SK-N-SH (cell line): ENCODE measurements at regions of chr7 and their contacts with region 1.

Region 1: DNA sequence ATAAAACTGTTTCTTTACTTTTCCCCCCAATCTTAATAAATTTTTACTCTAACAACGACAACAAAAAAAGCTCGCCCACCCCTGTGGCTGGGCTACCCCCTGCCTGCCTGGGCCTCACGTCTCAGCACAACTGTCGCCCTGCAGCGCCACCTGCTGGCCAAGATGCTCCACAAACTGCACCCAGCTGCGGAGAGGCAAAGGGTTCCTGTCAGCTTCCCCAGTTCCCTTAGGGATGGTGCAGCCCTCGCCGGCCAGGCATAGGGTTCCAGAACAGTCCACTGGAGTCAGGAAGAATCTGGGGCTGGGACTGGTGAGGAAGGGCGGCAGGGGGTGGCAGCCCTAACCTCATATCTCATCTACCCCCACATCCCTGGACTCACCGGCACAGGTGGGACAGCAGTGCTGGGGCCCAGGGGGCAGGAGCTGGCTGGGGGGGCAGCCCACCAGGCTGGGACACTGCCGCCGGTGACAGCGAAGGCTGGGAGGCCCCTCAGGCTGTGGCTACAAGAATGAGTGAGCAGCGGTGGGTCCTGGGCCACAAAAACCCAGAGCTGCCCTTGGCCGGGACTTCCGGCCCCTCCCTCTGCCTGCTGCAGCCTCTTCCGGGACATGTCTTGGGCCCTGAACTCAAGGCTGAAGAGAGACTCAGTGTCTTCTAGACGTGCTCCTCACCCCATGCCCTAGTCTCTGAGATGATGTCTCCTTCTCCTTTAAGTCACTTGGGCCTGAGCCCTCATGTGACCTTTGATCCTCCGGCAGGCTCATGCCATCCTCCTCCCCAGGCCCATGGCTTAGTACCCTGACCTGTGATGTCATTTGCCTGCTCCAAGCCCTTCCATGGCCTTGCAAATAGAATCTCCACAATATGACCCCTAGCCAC is 21.2 kb downstream of the ATP6V1F start:
- DNase-seq: peak; percentile 96
- H3K4me3 ChIP-seq: no peak overlapping the region
- H3K27ac ChIP-seq: no peak overlapping the region
- H3K4me1 ChIP-seq: peaks cover 0 to 7% of the 10 kb centered on the region in 2 experiments; a peak in 1 of 4 replicates
- H3K27me3 ChIP-seq: no peaks in the 10 kb centered on the region
- CTCF ChIP-seq: peak; percentile 99
- EP300 ChIP-seq: no peak
- RAD21 ChIP-seq: peak; percentile 81

Region 2: DNA sequence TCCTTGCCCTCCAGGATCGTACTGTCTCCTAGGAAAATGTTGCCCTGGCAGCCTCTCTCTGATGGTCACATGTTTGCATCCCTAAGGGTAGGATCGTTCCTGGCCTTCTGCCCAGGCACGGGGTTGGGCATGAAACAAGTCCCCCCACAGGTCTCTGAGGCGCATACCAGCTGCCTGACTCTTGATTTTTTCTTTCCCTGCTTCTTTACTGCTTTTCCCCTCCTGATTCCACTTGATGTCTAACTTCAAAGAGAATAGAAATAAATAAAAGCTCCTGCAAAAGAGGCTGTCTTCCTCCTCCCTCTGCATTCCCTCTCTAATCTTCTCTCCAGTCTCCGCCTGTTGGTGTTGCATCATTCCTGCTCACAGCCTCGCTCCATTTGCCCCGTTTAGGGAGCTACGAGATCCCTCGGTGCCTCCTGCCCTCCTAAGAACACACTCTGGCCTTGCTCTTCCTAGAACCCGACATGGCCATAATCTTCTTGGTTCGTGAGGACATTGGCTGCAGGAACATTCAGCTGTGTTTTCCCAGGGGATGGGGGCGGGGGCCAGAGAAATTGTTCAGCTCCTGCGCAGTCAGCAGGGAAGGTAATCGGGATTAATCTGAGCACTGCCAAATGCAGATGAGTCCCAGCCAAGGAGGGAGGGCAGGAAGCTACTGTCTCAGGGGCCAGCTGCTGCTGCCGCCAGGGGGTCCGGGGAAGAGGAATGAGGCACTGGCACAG is 616.8 kb before region 1 on chr7:
- CTCF ChIA-PET with region 1: no interaction called
- POLR2A ChIA-PET with region 1: no interaction called
- DNase-seq: peak; percentile 90
- H3K4me3 ChIP-seq: peak overlapping the region; percentile 30 to 33; a peak in 3 of 4 replicates
- H3K27ac ChIP-seq: peak overlapping the region; percentile 54 to 99
- H3K4me1 ChIP-seq: peaks cover 18 to 41% of the 10 kb centered on the region in 2 experiments; a peak in 3 of 4 replicates
- H3K27me3 ChIP-seq: no peaks in the 10 kb centered on the region
- CTCF ChIP-seq: peak; percentile 34
- EP300 ChIP-seq: peak; percentile 8 to 77; a peak in 3 of 4 replicates
- RAD21 ChIP-seq: peak; percentile 41

Region 3: DNA sequence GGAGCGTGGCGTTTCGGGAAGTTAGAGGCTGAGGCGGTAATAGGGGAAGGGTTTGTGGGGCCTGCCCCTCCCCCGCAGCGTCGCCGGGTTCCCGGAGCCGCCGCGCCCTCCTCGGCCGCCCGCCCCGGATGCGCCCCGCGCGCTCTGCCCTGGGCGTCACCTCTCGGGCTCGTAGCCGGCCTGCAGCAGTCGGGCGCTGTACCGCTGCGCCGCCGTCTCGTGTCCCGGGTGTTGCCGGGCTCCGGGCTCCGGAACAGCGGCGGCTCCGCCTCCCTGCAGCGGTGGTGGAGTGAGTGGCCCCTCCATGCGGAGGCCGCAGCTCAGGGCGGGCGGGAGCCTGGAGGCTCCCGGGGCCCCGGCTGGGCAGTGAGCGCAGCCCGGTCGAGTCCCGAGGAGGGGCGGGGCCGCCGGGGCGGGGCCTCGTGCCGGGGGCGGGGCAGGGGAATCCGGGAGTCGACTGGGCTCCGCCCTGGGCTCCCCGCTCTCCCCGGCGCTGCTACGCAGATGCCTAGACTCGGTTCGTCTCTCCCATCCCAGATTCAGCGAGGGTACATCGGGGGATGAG is 474.2 kb before region 1 on chr7 and contains the start of gene IMPDH1:
- CTCF ChIA-PET with region 1: interaction called, 10 read pairs
- POLR2A ChIA-PET with region 1: no interaction called
- DNase-seq: peak; percentile 100
- H3K4me3 ChIP-seq: peak within 1 kb of the TSS; percentile 69 to 83
- H3K27ac ChIP-seq: peak within 1 kb of the TSS; percentile 35 to 79; a peak in 3 of 4 replicates
- H3K4me1 ChIP-seq: peaks cover 16 to 27% of the 10 kb centered on the region in 2 experiments; a peak in 2 of 4 replicates
- H3K27me3 ChIP-seq: no peaks in the 10 kb centered on the region
- CTCF ChIP-seq: no peak
- EP300 ChIP-seq: no peak
- RAD21 ChIP-seq: no peak
- polyA plus RNA-seq, gene IMPDH1: 80.4 and 82.0 TPM in 2 replicates

Region 4: DNA sequence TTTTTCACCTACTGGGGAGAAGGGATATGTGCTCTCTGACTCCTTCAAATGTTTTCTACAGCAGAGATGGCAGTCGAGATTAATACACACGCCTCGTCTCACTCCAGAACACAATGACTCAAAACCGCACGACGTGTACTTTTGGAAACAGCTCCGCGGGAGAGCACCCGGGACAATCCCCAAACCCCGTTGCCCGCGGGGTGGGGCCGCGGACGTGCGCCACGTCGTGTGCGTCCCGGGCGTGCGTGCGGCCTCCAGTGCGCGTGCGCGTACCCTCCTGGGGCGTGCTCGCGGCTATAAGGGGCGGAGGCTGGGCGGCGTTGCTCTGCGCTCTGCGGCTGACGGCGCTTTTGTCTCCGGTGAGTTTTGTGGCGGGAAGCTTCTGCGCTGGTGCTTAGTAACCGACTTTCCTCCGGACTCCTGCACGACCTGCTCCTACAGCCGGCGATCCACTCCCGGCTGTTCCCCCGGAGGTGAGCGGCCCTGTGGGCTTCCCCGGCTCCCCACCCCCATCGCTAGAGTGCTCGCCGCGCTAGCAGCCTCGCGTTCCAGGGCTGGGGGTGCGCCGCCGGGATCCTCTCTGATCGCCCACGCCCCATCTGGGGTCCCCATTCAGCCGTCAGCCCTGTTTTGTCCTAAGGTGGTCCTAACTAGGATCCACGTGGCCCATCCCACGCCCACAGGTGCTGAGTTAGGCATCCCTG is 428.2 kb before region 1 on chr7 and contains the start of gene HILPDA:
- CTCF ChIA-PET with region 1: interaction called, 26 read pairs
- POLR2A ChIA-PET with region 1: no interaction called
- DNase-seq: peak; percentile 99
- H3K4me3 ChIP-seq: peak within 1 kb of the TSS; percentile 89 to 99
- H3K27ac ChIP-seq: peak within 1 kb of the TSS; percentile 81 to 91
- H3K4me1 ChIP-seq: peaks cover 25 to 38% of the 10 kb centered on the region in 2 experiments; a peak in 3 of 4 replicates
- H3K27me3 ChIP-seq: no peaks in the 10 kb centered on the region
- CTCF ChIP-seq: no peak
- EP300 ChIP-seq: peak in 1 of 2 experiments; percentile 20; a peak in 1 of 4 replicates
- RAD21 ChIP-seq: no peak
- polyA plus RNA-seq, gene HILPDA: 24.0 and 29.1 TPM in 2 replicates

Region 5: GRCh38 chr7:128697302-128697905 is 186.5 kb before region 1 on chr7:
- CTCF ChIA-PET with region 1: interaction called, 12 read pairs
- POLR2A ChIA-PET with region 1: no interaction called
- DNase-seq: peak; percentile 89
- H3K4me3 ChIP-seq: peak overlapping the region; percentile 54 to 60
- H3K27ac ChIP-seq: no peak overlapping the region
- H3K4me1 ChIP-seq: no peaks in the 10 kb centered on the region; a peak in 1 of 4 replicates
- H3K27me3 ChIP-seq: peaks cover 6% of the 10 kb centered on the region; the same call in 1 of the 2 replicates
- CTCF ChIP-seq: peak; percentile 54
- EP300 ChIP-seq: no peak
- RAD21 ChIP-seq: peak; percentile 32; the same call in 1 of the 2 replicates

Region 6: DNA sequence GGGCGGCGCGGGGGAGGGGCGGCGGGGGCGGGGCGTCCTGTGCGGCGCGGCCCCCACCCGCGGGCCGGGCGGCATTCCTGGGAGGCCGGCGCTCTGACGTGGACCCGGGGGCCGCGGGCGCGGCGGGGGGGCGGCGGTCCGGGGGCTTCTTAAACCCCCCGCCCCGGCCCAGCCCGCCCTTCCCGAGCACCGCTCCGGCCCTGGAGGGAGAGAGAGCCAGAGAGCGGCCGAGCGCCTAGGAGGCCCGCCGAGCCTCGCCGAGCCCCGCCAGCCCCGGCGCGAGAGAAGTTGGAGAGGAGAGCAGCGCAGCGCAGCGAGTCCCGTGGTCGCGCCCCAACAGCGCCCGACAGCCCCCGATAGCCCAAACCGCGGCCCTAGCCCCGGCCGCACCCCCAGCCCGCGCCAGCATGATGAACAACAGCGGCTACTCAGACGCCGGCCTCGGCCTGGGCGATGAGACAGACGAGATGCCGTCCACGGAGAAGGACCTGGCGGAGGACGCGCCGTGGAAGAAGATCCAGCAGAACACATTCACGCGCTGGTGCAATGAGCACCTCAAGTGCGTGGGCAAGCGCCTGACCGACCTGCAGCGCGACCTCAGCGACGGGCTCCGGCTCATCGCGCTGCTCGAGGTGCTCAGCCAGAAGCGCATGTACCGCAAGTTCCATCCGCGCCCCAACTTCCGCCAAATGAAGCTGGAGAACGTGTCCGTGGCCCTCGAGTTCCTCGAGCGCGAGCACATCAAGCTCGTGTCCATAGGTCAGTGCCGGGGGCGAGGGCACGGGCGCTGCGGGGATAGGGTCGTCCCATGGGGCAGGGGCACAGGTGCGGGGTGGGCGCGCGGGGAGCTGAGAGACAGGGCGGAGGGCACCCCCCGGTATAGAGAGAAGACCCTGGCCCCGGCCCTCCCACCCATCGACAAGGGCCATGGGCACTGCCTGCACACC is 53.4 kb before region 1 on chr7 and contains the start of gene FLNC:
- CTCF ChIA-PET with region 1: interaction called, 12 read pairs
- POLR2A ChIA-PET with region 1: no interaction called
- DNase-seq: peak; percentile 90
- H3K4me3 ChIP-seq: peak within 1 kb of the TSS; percentile 68 to 90
- H3K27ac ChIP-seq: peak within 1 kb of the TSS; percentile 50 to 98
- H3K4me1 ChIP-seq: peaks cover 39 to 43% of the 10 kb centered on the region in 2 experiments; a peak in 3 of 4 replicates
- H3K27me3 ChIP-seq: no peaks in the 10 kb centered on the region
- CTCF ChIP-seq: no peak
- EP300 ChIP-seq: no peak
- RAD21 ChIP-seq: no peak
- polyA plus RNA-seq, gene FLNC: 22.5 and 43.7 TPM in 2 replicates

Region 7: DNA sequence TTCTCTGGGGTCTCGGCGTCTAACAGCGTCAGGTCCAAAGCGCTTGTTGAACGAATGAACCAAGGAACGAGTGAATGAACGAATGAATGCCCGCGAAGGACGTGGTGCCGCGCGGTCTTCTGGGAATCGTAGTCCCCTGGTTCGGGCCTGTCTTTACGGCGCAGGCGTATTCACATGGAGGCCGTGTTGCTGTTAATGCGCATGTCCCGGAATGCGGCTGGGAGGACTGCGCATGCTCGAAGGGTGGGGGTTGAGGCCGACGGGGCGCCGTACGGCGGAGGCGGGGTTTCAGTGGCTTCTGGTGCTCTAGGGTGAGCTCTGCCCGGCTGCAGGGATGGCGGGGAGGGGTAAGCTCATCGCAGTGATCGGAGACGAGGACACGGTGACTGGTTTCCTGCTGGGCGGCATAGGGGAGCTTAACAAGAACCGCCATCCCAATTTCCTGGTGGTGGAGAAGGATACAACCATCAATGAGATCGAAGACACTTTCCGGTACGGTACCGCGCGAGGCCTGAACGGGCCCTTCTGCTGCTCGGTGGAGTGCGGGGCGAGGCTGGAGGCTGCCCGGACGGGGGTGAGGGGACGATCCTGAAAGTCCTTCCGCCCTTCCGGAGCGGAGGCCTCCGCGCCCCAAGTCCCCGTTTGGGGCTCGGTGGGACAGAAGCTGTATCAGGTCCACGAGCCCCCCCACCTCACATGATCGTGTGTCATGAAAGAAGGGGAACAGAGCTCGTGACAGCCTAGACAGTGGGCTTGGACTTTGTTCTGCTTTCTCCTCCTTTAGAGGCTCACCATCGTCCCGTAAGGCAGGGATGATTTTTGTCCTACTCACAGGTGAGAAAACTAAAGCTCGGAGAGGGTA is 21.1 kb before region 1 on chr7 and contains the start of gene ATP6V1F:
- CTCF ChIA-PET with region 1: interaction called, 181 read pairs
- POLR2A ChIA-PET with region 1: no interaction called
- DNase-seq: peak; percentile 100
- H3K4me3 ChIP-seq: peak within 1 kb of the TSS; percentile 89 to 95
- H3K27ac ChIP-seq: peak within 1 kb of the TSS; percentile 60 to 72
- H3K4me1 ChIP-seq: peaks cover 0 to 18% of the 10 kb centered on the region in 2 experiments; a peak in 1 of 4 replicates
- H3K27me3 ChIP-seq: no peaks in the 10 kb centered on the region
- CTCF ChIP-seq: no peak
- EP300 ChIP-seq: no peak
- RAD21 ChIP-seq: no peak
- polyA plus RNA-seq, gene ATP6V1F: 437 and 495 TPM in 2 replicates

Region 8: DNA sequence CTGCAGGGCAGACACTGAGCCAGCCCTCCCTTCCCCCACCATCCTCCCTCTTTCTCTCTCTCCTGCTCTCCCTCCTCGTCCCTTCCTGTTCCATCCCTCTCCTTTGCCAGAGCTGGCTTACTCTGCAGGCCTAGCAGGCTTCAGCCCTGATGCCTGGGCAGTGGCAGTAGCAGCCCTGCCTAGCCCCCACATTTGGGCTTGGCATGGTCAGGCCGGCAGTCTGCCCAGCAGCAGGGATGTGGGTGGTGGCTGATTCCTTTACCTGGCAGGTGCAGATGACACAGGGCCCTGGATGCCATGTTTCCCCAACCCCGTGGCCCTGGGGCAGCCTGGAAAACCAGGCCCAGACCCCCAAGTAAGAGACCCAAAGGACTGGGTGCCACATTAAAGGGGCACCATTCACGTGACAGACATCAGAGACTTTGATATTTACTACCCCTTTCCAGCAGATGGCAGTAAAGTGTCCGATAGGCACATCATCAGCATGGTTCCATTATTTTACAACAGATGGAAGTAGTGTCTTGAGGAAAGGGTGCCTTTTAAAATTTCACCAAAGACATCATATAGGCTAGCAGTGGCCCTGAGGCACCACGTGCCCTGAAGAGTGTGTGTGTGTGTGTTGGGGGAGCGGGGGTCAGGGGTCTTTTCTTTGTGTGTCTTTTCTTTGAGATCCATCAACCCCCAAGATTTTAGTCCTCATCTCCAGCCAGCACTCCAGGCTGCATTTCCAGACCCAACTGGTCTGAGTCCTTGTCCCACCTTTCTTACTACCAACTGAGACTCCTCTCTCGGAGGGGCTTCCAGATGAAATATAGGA is 20.7 kb after region 1 on chr7:
- CTCF ChIA-PET with region 1: interaction called, 104 read pairs
- POLR2A ChIA-PET with region 1: no interaction called
- DNase-seq: peak; percentile 87
- H3K4me3 ChIP-seq: no peak overlapping the region
- H3K27ac ChIP-seq: no peak overlapping the region
- H3K4me1 ChIP-seq: peaks cover 0 to 6% of the 10 kb centered on the region in 2 experiments; a peak in 1 of 4 replicates
- H3K27me3 ChIP-seq: 0 out of 2 replicates have a peak, but pooled peaks cover 8% of the 10 kb centered on the region
- CTCF ChIP-seq: peak; percentile 74
- EP300 ChIP-seq: no peak
- RAD21 ChIP-seq: peak; percentile 79

Region 9: DNA sequence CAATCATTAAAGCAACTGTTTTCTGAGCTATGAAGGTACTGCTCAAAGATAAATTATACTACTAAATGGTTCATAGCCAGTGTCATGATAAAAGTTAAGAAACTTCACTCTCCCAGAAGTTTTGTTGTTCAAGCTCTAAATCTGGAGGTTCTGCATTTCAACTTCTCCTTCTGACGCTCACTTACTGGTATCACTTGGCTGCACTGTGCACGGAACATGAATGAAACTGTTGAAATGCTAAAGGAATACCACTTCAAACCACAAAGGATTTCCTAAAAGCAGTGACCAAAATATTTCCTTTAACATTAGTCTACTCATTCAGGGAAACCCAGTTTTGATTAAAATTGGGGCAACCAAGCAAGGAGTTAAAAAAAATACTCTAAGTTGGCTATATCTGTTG is 975.3 kb after region 1 on chr7:
- CTCF ChIA-PET with region 1: no interaction called
- POLR2A ChIA-PET with region 1: no interaction called
- DNase-seq: no peak
- H3K4me3 ChIP-seq: no peak overlapping the region
- H3K27ac ChIP-seq: peak overlapping the region; percentile 98 to 99
- H3K4me1 ChIP-seq: peaks cover 53 to 74% of the 10 kb centered on the region in 2 experiments
- H3K27me3 ChIP-seq: no peaks in the 10 kb centered on the region
- CTCF ChIP-seq: no peak
- EP300 ChIP-seq: no peak
- RAD21 ChIP-seq: no peak